Activated naive CD4-positive, alpha-beta T cell treated with anti-CD3 and anti-CD28 coated beads, Interleukin-2, amount 10 ng/mL, durations not matched to agents 7 days and 5 days (primary cell): ENCODE measurements at regions of chr18 and their contacts with region 1.

Region 1: DNA sequence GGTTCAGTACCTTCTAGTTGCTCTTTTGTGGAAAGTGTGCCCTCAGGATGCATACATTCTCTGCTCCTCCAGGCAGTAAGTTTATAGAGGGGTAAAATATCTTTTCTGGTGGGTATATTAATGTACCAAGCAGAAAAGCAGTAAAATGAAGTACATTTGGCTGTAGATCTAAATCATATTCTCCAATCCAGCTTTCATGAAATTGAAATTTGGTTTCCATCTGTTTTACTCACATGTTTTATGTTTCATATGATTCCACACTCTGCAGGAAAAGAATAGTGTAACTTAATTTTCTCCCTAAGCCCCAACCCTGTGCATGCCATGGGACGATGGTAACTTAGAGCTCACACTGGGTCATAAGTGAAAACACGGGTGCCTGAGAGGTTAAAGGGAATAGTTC is 172.3 kb downstream of the AKAIN1 start:
- DNase-seq: no peak
- H3K4me3 Mint-ChIP-seq: no peak overlapping the region
- H3K27ac Mint-ChIP-seq: no peak overlapping the region
- H3K4me1 Mint-ChIP-seq: no peaks in the 10 kb centered on the region
- H3K27me3 Mint-ChIP-seq: no peaks in the 10 kb centered on the region

Region 2: GRCh38 chr18:4807604-4808293 is 217.0 kb before region 1 on chr18:
- CTCF ChIA-PET with region 1: no interaction called
- DNase-seq: no peak
- H3K4me3 Mint-ChIP-seq: no peak overlapping the region
- H3K27ac Mint-ChIP-seq: no peak overlapping the region
- H3K4me1 Mint-ChIP-seq: no peaks in the 10 kb centered on the region
- H3K27me3 Mint-ChIP-seq: no peaks in the 10 kb centered on the region

Region 3: GRCh38 chr18:4931209-4931608 is 93.5 kb before region 1 on chr18:
- CTCF ChIA-PET with region 1: no interaction called
- DNase-seq: no peak
- H3K4me3 Mint-ChIP-seq: no peak overlapping the region
- H3K27ac Mint-ChIP-seq: no peak overlapping the region
- H3K4me1 Mint-ChIP-seq: no peaks in the 10 kb centered on the region
- H3K27me3 Mint-ChIP-seq: no peaks in the 10 kb centered on the region

Region 4: GRCh38 chr18:5036523-5036922 is 11.8 kb after region 1 on chr18:
- CTCF ChIA-PET with region 1: interaction called, 12 read pairs
- DNase-seq: no peak
- H3K4me3 Mint-ChIP-seq: no peak overlapping the region
- H3K27ac Mint-ChIP-seq: no peak overlapping the region
- H3K4me1 Mint-ChIP-seq: no peaks in the 10 kb centered on the region
- H3K27me3 Mint-ChIP-seq: peaks cover 3% of the 10 kb centered on the region